Mammary epithelial cell (primary cell): ENCODE measurements at regions of chr1 and their contacts with region 1.

Region 1: GRCh38 chr1:9942939-9943788 is at the starts of genes LZIC and NMNAT1:
- DNase-seq: peak; percentile 95
- H3K4me3 ChIP-seq: peak within 1 kb of the TSS; percentile 66 to 77 (median 67)
- H3K27ac ChIP-seq: peak within 1 kb of the TSS; percentile 95
- H3K4me1 ChIP-seq: peaks cover 5% of the 10 kb centered on the region
- H3K27me3 ChIP-seq: no peaks in the 10 kb centered on the region
- CTCF ChIP-seq: no peak
- total RNA-seq, gene LZIC: 19.8 to 30.6 TPM
- total RNA-seq, gene NMNAT1: 9.7 to 11.1 TPM

Region 2: DNA sequence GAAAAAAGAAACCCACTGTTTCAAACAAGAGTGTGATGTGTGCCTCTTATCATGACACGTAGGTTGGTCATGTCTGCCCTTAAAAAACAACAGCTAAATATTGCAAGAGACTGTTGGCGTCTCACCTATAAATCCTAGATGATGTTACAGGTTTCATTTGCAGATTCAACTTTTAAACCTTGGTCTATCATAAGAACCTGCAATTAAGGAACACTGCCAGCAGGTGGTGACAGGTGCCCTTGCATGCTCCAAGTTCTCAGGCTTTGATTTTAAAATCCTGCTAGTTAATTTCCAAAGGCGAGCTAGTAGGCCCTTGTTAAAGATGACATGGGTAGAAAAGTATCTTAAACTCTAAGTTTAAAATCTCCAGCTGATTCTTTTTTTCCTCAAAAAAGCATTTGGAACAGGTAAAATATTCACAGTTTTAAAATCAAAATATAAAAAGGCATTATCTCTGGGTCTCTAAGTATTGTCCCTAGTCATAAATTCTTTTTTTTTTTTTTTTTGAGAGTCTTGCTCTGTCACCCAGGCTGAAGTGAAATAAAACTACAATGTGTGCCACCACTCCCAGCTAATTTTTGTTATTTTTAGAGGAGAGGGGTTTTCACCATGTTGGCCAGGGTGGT is 158.5 kb before region 1 on chr1:
- CTCF ChIA-PET with region 1: interaction called, 5 read pairs
- dilution Hi-C with region 1: no loop called
- in situ Hi-C with region 1: no loop called
- intact Hi-C with region 1: loop called (anchors 10 kb)
- DNase-seq: peak; percentile 52
- H3K4me3 ChIP-seq: no peak overlapping the region
- H3K27ac ChIP-seq: no peak overlapping the region
- H3K4me1 ChIP-seq: peaks cover 12% of the 10 kb centered on the region
- H3K27me3 ChIP-seq: no peaks in the 10 kb centered on the region
- CTCF ChIP-seq: peak; percentile 79 to 84

Region 3: DNA sequence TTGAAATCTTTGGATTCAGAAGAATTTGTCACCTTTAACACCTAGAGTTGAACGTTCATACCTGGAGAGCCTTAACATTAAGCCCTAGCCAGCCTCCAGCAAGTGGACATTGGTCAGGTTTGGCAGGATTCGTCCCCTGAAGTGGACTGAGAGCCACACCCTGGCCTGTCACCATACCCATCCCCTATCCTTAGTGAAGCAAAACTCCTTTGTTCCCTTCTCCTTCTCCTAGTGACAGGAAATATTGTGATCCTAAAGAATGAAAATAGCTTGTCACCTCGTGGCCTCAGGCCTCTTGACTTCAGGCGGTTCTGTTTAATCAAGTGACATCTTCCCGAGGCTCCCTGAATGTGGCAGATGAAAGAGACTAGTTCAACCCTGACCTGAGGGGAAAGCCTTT is 141.9 kb after region 1 on chr1:
- CTCF ChIA-PET with region 1: no interaction called
- dilution Hi-C with region 1: no loop called
- in situ Hi-C with region 1: no loop called
- intact Hi-C with region 1: no loop called
- DNase-seq: no peak
- H3K4me3 ChIP-seq: no peak overlapping the region
- H3K27ac ChIP-seq: no peak overlapping the region
- H3K4me1 ChIP-seq: peaks cover 21% of the 10 kb centered on the region
- H3K27me3 ChIP-seq: no peaks in the 10 kb centered on the region
- CTCF ChIP-seq: no peak

Region 4: GRCh38 chr1:10152709-10153284 is 209.6 kb after region 1 on chr1:
- CTCF ChIA-PET with region 1: no interaction called
- dilution Hi-C with region 1: no loop called
- in situ Hi-C with region 1: no loop called
- intact Hi-C with region 1: loop called (anchors 2 kb)
- DNase-seq: peak; percentile 40
- H3K4me3 ChIP-seq: no peak overlapping the region
- H3K27ac ChIP-seq: no peak overlapping the region
- H3K4me1 ChIP-seq: no peaks in the 10 kb centered on the region
- H3K27me3 ChIP-seq: no peaks in the 10 kb centered on the region
- CTCF ChIP-seq: peak; percentile 71 to 81